Activated T-helper 1 cell treated with anti-CD3 and anti-CD28 coated beads, Interleukin-12 subunit alpha, Interleukin-12 subunit beta, Interleukin-2, Interleukin-4 antibody, amounts not matched to agents 30 ng/mL and 10 ng/mL and 1 ng/mL, durations not matched to agents 14 hours and 24 hours and 36 hours (primary cell): ENCODE measurements at regions of chr10 and their contacts with region 1.

Region 1: DNA sequence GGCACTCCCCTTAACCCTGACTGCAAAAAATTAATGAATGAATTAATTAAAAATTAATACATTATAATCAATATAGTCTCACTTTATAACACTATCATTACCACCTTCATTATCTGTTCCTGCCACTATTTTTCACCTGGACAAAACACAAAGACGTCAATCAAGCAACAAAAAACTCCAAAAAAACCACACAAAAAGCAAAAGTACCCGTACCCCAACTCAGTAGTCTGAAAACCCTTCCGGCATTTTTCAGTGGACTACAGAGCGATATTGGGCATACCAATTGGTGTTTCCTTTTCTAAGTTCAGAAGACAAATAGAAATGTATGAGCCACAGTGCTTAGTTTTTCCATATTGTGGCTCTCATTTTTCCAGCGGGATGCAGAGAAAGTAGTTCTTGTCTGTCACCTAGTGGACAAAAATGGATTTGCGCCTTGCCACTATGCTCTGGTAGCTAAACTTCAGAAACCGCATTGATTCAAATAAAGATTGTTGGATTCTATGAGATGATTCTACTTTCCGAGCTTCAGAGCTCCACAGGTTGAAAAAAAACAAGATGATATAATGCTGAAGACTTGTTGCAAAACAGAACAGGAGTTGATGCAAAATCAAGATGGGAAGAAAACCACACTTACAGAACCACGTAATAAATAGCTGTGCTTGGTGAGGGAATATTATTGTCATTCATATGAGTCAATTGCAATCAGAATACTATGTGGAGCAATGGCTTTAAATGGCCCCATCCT is 50.6 kb upstream of the ITGB1 start:
- DNase-seq: peak; percentile 31
- H3K4me3 Mint-ChIP-seq: peak overlapping the region; percentile 63
- H3K27ac Mint-ChIP-seq: peak overlapping the region; percentile 40
- H3K4me1 Mint-ChIP-seq: peaks cover 24% of the 10 kb centered on the region
- H3K27me3 Mint-ChIP-seq: peaks cover 10% of the 10 kb centered on the region

Region 2: DNA sequence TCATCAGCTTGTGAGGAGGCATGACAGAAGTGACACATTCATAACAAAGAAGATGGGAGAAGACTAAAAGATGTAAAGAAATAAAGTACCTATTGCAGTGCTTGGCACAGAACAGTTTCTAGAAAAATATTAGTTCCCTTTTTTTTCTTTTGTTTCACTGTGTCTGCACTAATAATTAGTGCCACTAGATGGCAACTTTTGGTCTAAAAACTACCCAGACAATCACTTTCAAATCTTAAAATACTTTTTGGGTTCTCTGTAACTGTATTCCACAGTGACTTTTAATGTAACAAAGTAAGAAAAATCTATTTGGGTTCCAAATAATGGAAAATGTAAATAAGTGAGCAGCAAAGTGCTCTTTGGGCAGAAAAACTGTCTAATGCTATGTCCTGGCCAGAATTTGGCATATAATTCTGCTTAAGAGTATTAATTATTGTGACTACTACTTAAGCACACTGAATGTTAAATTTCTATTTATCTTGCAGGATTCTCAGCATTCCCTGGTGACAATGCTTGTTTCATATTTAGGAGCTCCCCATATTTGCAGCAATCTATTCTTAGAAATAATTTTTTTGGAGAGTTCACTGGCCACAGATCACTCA is 817.7 kb before region 1 on chr10:
- intact Hi-C with region 1: loop called (anchors 1 kb)
- DNase-seq: no peak
- H3K4me3 Mint-ChIP-seq: no peak overlapping the region
- H3K27ac Mint-ChIP-seq: no peak overlapping the region
- H3K4me1 Mint-ChIP-seq: peaks cover 7% of the 10 kb centered on the region
- H3K27me3 Mint-ChIP-seq: no peaks in the 10 kb centered on the region

Region 3: DNA sequence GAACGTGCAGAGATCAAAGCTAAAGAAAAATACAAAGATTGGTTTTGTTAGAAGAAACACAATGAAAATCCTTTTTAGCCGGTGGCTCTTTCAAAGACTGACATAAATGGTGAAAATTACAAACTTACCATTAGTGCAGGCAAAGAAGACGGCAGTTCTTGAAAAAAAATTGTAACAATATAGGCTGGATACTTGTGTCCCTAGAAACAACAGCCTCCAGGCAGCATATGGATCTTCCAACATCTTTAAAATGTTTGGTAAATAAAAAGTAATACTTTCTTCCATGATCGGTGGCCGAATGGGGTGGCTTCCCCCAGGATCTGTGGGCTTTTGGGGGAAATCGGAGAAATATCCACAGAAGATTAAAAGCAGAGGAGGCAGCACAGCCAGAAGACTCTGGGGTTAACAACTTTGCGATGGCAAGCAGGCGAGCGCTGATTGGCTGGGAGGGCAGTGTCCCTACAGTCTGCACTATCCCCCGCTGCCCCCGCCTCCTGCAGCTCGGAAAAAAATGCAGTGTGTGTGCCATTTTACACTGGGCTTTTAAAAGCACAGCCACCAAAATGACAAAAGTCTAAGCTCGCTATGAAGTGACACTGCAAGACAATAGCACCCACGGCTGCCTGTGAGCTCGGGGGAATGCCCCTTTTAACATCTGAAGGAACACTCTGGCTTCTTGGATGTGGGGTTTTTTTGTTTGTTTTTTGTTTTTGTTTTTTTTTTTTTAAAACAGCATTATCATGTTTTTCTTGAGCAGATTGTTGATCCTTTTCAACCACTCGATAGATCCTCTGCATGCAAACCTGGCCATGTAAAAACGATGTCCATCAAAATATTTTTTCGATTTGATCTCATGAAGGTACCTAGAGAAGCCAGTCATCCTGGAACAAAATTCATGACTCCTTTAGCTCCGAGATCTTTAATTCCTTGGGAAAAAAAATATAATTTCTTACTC is 630.0 kb before region 1 on chr10:
- intact Hi-C with region 1: loop called (anchors 2 kb)
- DNase-seq: peak; percentile 88
- H3K4me3 Mint-ChIP-seq: no peak overlapping the region
- H3K27ac Mint-ChIP-seq: no peak overlapping the region
- H3K4me1 Mint-ChIP-seq: peaks cover 26% of the 10 kb centered on the region
- H3K27me3 Mint-ChIP-seq: no peaks in the 10 kb centered on the region

Region 4: DNA sequence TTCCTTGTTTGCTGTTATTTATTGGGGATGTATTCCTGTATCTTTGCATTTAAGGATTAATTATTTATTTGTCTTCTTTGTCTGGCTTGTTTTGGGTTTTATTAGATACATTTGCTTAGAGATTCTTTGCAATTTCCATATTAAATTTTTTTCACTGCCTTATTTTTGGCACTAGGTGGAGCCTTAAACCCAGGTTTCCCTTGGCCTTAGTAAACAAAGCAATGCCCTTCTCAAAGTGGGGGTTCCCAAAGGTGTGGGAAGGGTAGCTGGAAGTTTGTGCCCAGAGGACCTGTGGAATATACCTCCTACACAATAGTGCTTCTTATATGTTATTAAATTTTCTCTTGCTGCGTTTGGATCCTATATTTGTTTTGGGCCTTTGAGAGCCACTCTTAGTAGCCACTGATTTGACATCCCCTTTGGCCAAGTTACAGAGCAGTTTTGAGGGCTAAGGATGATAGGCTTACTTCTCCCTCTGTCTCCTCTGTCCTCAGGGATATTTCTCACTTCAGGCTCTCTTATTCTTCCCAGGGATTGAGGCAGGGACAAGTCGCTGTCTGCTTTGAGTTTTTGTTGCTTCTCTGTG is 213.0 kb before region 1 on chr10:
- intact Hi-C with region 1: loop called (anchors 1 kb)
- DNase-seq: no peak
- H3K4me3 Mint-ChIP-seq: no peak overlapping the region
- H3K27ac Mint-ChIP-seq: no peak overlapping the region
- H3K4me1 Mint-ChIP-seq: no peaks in the 10 kb centered on the region
- H3K27me3 Mint-ChIP-seq: peaks cover 2% of the 10 kb centered on the region

Region 5: GRCh38 chr10:32980558-32981468 is 27.9 kb before region 1 on chr10:
- intact Hi-C with region 1: loop called (anchors 2 kb)
- DNase-seq: peak; percentile 68
- H3K4me3 Mint-ChIP-seq: peak overlapping the region; percentile 88
- H3K27ac Mint-ChIP-seq: peak overlapping the region; percentile 88
- H3K4me1 Mint-ChIP-seq: peaks cover 28% of the 10 kb centered on the region
- H3K27me3 Mint-ChIP-seq: no peaks in the 10 kb centered on the region

Region 6: DNA sequence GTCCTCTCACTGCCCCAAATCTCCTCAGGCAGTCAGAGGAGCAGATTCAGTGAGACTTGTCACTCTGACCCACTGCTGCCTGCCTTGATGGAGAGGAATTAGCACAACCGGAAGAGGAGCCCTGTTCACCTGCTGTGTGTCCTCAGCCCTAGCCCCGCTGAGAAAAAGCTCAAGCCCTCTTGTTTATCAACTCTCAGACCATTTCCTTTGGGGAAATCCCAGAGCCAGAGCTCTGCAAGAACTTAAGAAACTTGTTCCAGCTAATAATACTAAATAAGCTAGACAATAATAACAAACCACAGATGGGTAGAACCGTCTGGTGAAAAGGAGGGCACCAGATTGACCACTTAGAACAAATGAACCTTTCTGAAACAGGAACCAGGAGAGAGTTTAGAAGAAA is 12.9 kb before region 1 on chr10:
- intact Hi-C with region 1: no loop called
- DNase-seq: no peak
- H3K4me3 Mint-ChIP-seq: no peak overlapping the region
- H3K27ac Mint-ChIP-seq: no peak overlapping the region
- H3K4me1 Mint-ChIP-seq: peaks cover 5% of the 10 kb centered on the region
- H3K27me3 Mint-ChIP-seq: peaks cover 2% of the 10 kb centered on the region

Region 7: DNA sequence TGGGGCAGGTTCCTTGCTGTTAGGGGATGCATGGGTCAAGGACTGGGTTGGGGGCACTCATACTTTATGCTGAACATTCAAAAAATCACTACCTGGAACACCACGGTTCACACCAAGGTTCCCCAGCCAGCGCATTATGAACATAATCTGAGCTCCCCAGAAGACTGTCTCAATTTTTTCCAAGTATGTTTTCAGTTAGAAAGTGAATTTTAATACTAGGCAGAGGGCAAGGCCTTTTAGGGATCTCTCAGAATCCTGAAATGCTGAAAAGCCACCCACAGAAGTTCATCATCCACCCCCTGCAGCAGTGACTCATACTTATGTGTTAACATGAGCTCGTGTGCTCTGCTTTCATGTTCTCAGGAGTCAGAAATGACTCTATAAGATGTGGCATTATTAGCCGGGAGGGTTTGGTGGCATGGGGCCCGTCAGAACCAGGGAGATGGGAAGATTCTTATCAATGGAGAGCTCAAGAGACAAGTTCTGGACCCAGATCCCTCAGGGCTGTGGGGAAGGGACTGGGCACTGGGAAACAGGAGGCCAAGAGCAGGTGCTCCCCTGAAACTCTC is 134.6 kb after region 1 on chr10:
- intact Hi-C with region 1: loop called (anchors 2 kb)
- DNase-seq: peak; percentile 31
- H3K4me3 Mint-ChIP-seq: no peak overlapping the region
- H3K27ac Mint-ChIP-seq: peak overlapping the region; percentile 70
- H3K4me1 Mint-ChIP-seq: peaks cover 49% of the 10 kb centered on the region
- H3K27me3 Mint-ChIP-seq: no peaks in the 10 kb centered on the region